ENCODE measurements at regions of chr2 and their contacts with region 1.

Region 1: DNA sequence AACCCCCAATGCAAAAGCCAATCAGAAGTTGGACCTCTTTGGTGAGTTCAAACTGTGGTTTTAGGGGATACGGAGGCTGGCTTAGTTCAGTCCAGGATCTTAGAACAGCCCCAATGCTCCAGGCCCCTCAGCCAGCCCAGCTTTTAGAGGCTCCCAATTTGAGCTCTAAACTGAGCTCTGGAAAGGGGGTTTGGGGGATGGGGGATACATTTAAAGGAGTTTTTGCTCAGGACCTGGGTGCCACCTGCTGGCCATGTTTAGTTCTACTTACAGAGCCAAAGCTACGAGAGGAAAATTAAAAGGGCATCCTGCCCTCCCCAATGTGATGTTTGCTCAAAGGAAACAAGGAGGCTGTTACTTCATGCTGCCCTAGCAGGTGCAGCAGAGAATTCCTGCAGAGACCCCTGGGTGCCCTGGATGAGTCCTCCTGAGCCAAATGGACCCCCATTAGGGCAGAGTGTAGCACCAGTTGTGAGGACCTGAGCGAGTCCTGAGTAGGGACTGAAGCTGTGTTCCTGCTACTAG is 15.9 kb upstream of the TMEM214 start:
- DNase-seq: peak; percentile 25
- H3K4me3 ChIP-seq: no peak overlapping the region
- H3K27ac ChIP-seq: no peak overlapping the region
- H3K4me1 ChIP-seq: no peaks in the 10 kb centered on the region
- H3K27me3 ChIP-seq: no peaks in the 10 kb centered on the region
- CTCF ChIP-seq: peak; percentile 57 to 77 (median 72)
- POLR2A ChIP-seq: no peak

Region 2: DNA sequence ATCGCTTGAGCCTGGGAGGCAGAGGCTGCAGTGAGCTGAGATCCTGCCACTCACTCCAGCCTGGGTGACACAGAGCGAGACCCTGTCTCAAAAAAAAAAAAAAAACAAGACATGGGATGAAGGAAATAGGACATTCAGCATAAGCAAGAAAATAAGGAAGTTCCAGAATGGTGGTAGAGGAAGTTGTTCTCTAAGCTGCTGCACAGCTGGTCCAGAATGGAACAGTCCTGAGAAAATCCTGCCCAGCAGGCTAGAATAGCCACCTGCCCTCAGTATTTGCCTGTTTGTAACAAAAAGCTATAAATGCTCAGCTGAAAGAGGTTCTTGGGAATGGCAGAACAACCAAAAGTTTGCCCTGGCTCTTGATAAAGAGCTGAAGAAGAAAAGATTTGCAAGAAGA is 57.5 kb before region 1 on chr2:
- intact Hi-C with region 1: loop called (anchors 2 kb)
- DNase-seq: no peak
- H3K4me3 ChIP-seq: no peak overlapping the region
- H3K27ac ChIP-seq: no peak overlapping the region
- H3K4me1 ChIP-seq: no peaks in the 10 kb centered on the region
- H3K27me3 ChIP-seq: peaks cover 8% of the 10 kb centered on the region
- CTCF ChIP-seq: no peak
- POLR2A ChIP-seq: no peak

Region 3: GRCh38 chr2:27322766-27323595 is 306.1 kb after region 1 on chr2 and contains the start of gene MPV17:
- intact Hi-C with region 1: no loop called
- DNase-seq: peak; percentile 92
- H3K4me3 ChIP-seq: peak within 1 kb of the TSS; percentile 61 to 64
- H3K27ac ChIP-seq: peak within 1 kb of the TSS; percentile 87 to 92
- H3K4me1 ChIP-seq: peaks cover 10% of the 10 kb centered on the region
- H3K27me3 ChIP-seq: no peaks in the 10 kb centered on the region
- CTCF ChIP-seq: no peak
- POLR2A ChIP-seq: peak; percentile 84
- total RNA-seq, gene MPV17: 82.5 to 90.3 TPM

Region 4: GRCh38 chr2:27428978-27429541 is 412.2 kb after region 1 on chr2:
- intact Hi-C with region 1: no loop called
- DNase-seq: peak; percentile 75
- H3K4me3 ChIP-seq: peak overlapping the region; percentile 97 to 98
- H3K27ac ChIP-seq: peak overlapping the region; percentile 99 to 100
- H3K4me1 ChIP-seq: peaks cover 4% of the 10 kb centered on the region
- H3K27me3 ChIP-seq: no peaks in the 10 kb centered on the region
- CTCF ChIP-seq: no peak
- POLR2A ChIP-seq: peak; percentile 39

Measured in prostate gland (tissue), 2 donors.